SK-N-SH (cell line): ENCODE measurements at regions of chr15 and their contacts with region 1.

Region 1: DNA sequence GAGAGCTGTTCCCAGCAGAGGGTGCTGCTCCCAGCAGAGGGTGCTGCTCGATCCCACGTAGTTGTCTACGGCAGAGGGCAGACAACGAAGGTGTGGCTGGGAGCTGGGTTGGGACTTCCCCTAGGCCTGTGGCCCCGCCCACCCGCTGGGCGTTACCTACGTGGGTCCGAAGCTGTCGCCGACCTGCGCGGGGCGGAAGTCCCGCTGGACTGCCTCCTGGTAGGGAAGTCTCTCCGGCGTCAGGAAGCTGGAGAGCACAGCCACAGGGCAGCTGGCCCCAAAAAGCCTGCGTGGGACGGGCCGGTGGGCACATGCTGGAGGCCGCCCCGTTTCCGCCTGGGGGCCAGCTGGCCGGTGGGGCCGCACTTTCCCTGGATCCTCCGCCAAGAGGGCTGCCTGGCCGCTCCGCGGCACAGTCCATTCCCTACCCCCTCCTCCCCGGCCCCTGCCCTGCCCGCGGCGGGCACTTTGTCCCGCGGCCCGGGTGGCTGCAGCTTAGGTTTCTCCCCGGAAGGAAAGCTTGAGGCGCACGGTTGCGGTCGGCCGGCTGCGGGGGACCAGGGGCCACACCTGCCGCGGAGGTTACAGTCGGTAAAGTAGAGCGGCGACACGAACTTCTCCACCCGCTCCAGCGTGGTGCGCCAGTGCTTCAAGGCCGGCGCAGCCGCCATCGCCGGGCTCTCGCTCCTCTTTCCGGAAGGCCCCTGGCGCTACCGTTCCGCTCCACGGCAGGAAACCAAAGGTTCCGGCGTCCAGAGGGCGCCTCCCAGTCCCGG is at the start of gene MAN2C1:
- DNase-seq: peak; percentile 96
- H3K4me3 ChIP-seq: peak within 1 kb of the TSS; percentile 73 to 92
- H3K27ac ChIP-seq: peak within 1 kb of the TSS; percentile 90 to 92
- H3K4me1 ChIP-seq: peaks cover 5 to 16% of the 10 kb centered on the region in 2 experiments; a peak in 3 of 4 replicates
- H3K27me3 ChIP-seq: no peaks in the 10 kb centered on the region
- CTCF ChIP-seq: peak; percentile 75; the same call in 1 of the 2 replicates
- EP300 ChIP-seq: 0 out of 4 replicates have a peak, but pooled peaks of 1 of the 2 experiments have one; percentile 61
- RAD21 ChIP-seq: peak; percentile 64
- polyA plus RNA-seq, gene MAN2C1: 132 and 169 TPM in 2 replicates

Region 2: GRCh38 chr15:75347222-75347878 is 20.8 kb before region 1 on chr15:
- CTCF ChIA-PET with region 1: interaction called, 29 read pairs
- POLR2A ChIA-PET with region 1: interaction called, 11 read pairs
- DNase-seq: peak; percentile 87
- H3K4me3 ChIP-seq: peak overlapping the region; percentile 70 to 77
- H3K27ac ChIP-seq: peak overlapping the region in 1 of 2 experiments; percentile 73; a peak in 1 of 4 replicates
- H3K4me1 ChIP-seq: peaks cover 0 to 11% of the 10 kb centered on the region in 2 experiments; a peak in 1 of 4 replicates
- H3K27me3 ChIP-seq: no peaks in the 10 kb centered on the region
- CTCF ChIP-seq: no peak
- EP300 ChIP-seq: no peak
- RAD21 ChIP-seq: no peak

Region 3: DNA sequence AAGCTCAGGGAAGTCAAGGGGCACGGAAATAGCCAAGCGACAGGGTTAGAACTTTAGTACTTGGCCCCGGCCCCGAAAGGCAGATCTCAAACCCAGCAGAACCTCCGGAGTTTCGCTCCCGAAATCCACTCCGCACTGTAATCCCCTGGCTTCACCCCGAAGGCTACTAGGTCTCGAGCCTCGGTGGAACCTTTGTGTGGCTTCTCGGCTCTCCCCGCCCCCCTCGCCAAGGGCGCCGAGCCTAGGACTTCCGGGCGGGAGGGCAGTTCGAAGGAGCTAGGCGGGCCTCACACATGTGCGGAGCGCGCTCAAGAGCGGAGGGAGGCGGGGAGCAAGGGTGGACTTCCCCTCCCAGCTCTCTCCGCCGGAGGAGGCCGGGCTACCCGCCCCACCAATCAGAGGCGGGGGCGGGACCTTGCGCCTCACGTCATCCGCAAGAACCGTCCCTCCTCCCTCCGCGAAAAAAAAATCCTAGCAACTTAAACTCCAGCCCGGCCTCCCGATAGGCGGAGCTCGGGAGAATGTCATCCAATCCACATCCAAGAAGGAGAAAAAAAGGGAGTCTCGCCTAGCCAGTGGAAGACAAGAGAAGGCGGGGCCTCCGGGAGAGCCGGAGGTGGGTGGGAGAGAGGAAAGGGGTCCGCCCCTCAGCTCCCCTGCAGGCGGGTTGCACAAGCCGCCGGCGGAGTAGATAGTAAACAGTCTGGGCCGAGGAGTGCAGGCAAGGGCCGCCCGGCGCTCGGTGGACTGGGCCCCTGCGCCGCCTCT is 85.8 kb after region 1 on chr15:
- CTCF ChIA-PET with region 1: interaction called, 19 read pairs
- POLR2A ChIA-PET with region 1: interaction called, 7 read pairs
- DNase-seq: peak; percentile 91
- H3K4me3 ChIP-seq: peak overlapping the region; percentile 93 to 97
- H3K27ac ChIP-seq: peak overlapping the region; percentile 96 to 99
- H3K4me1 ChIP-seq: peaks cover 5 to 23% of the 10 kb centered on the region in 2 experiments; a peak in 3 of 4 replicates
- H3K27me3 ChIP-seq: no peaks in the 10 kb centered on the region
- CTCF ChIP-seq: no peak
- EP300 ChIP-seq: 0 out of 4 replicates have a peak, but pooled peaks of 1 of the 2 experiments have one; percentile 0
- RAD21 ChIP-seq: no peak

Region 4: DNA sequence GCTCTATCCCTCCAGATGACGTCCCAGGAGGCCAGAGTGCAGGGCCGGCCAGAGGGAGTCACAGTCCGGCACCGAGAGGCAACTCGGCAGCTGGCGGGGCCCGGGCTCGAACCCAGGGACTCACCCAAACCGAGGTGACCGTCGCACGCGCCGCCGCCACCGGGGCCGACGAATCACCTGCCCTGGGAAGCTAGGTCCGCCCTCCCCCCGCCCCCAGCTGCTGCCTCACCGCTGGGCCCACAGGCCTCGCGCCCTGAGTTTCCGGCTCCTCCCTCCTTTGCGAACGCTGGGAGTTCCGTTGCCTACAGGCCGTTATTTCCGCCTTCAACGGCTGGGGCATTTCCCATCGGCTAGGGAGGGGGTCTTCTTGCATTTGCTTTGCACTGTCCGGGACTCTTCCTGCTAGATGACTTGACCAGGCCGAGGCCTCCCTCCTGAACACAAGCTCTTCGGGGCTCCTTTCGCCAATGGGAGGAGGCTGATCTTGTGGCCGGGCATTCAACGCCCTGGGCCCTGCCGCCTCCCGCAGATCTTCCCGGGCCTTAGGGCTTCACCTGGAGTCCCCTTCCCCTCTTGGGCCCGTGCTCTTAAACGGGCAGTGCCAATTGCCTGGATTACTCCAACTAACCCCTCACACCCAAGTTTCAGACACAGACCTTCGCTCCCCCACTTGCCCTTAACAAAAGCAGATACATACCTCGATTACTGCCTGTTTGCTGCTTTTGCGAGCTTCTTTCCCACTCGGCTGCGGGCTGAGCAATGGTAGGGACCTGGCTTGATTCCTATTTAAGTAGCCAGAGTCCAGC is 257.6 kb after region 1 on chr15 and contains the start of gene SNUPN:
- CTCF ChIA-PET with region 1: interaction called, 8 read pairs
- POLR2A ChIA-PET with region 1: interaction called, 10 read pairs
- DNase-seq: peak; percentile 96
- H3K4me3 ChIP-seq: peak within 1 kb of the TSS; percentile 73 to 88
- H3K27ac ChIP-seq: peak within 1 kb of the TSS; percentile 92 to 95
- H3K4me1 ChIP-seq: peaks cover 5 to 10% of the 10 kb centered on the region in 2 experiments; a peak in 3 of 4 replicates
- H3K27me3 ChIP-seq: no peaks in the 10 kb centered on the region
- CTCF ChIP-seq: no peak
- EP300 ChIP-seq: peak; percentile 22 to 44; a peak in 3 of 4 replicates
- RAD21 ChIP-seq: no peak
- polyA plus RNA-seq, gene SNUPN: 31.7 and 36.4 TPM in 2 replicates

Region 5: DNA sequence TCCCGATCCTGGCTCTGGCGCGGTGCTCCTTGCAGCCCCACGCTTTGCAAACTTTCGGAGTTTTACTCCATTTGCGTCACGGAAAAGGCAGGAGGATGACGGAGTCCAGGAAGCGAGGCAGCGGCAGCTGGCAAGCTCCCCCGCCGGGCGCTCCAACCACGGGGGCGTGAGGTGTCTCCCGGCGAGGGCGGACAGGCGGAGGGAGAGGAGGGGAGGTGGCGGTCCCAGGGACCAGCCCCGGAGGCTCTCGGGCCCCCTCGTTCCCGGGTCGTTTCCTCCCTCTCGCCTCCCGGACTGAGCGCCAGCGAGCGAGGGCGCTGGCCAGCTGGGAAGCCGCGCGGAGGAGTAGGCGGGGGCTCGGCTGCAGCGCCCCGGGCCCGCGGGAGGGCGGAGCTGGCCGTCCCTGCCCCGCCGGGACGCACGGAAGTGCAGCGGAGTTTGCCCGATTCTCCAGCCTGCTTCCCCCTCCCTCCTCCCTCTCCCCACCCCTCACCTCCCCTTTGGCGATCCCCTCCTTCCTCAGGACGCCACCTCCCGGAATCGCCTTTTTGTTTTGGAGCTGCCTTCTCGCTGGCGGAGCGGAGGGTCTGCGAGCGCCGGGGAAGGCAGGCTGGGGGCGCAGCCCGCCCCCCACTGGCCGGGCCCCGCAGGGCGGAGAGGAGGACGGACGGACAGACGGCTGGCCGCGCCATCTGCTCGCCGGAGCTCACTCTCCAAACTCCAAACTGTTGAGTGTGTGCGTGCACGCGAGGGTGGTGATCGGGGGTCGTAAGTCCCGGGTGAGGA is 279.5 kb after region 1 on chr15 and contains the start of gene SNX33:
- CTCF ChIA-PET with region 1: interaction called, 17 read pairs
- POLR2A ChIA-PET with region 1: interaction called, 6 read pairs
- DNase-seq: peak; percentile 94
- H3K4me3 ChIP-seq: peak within 1 kb of the TSS; percentile 73 to 98
- H3K27ac ChIP-seq: peak within 1 kb of the TSS; percentile 81 to 96
- H3K4me1 ChIP-seq: peaks cover 13 to 45% of the 10 kb centered on the region in 2 experiments; a peak in 3 of 4 replicates
- H3K27me3 ChIP-seq: no peaks in the 10 kb centered on the region
- CTCF ChIP-seq: peak; percentile 65
- EP300 ChIP-seq: no peak
- RAD21 ChIP-seq: peak; percentile 4; the same call in 1 of the 2 replicates
- polyA plus RNA-seq, gene SNX33: 7.7 and 8.5 TPM in 2 replicates